Mucosa of descending colon (tissue), 3 donors: ENCODE measurements at regions of chr11 and their contacts with region 1.

Region 1: DNA sequence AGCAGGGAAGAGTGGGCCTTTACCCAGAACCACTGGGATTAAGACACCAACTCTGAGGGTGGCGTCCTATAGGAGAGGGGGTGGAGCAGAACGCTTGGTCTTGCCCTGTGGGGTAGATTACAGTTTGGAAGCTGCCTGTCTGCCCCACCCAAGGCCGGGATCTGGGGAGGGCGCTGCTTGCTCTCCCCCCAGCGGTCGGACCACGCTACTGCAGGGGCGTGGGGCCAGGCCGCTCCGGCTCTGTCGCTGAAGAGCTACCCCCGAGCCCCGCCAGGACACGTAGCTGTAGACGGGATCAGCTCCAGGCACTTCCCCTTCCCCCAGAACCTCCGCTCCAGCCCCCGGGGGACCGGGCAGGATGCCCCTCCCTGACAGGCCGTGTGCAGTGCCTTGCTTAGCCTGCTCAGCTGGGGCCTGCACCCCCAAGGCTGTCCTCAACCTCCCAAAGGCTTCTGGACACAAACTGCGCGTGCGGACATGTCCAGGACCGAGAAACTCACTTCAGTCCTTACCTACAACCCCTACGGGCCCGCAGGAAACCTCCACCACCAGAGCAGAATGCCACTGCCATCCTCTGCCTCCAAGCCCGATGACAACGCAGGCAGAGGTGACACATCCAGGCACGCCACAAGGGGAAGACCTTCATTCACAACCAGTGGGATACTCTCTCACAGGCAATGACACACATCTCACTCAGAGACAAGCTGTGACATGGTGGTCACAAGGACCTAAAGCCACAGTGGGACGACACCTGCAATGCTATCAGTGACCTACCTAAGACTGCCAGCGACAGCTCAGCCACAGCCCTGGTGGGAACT is 3.6 kb downstream of the AHNAK start:
- DNase-seq: peak; percentile 88 to 92 (median 89)
- ATAC-seq: peak; percentile 57
- H3K4me3 ChIP-seq: peak overlapping the region; percentile 12
- H3K4me1 ChIP-seq: peaks cover 68% of the 10 kb centered on the region
- CTCF ChIP-seq: peak; percentile 100

Region 2: GRCh38 chr11:62394825-62395538 is 148.0 kb before region 1 on chr11:
- intact Hi-C with region 1: loop called in 1 of 2 experiments (anchors 10 kb)
- DNase-seq: peak; percentile 71 to 77 (median 76)
- ATAC-seq: peak; percentile 86
- H3K4me3 ChIP-seq: no peak overlapping the region
- H3K4me1 ChIP-seq: peaks cover 13% of the 10 kb centered on the region
- CTCF ChIP-seq: peak; percentile 31

Region 3: GRCh38 chr11:62421996-62422395 is 121.0 kb before region 1 on chr11:
- intact Hi-C with region 1: loop called (anchors 5 kb)
- DNase-seq: no peak
- ATAC-seq: no peak
- H3K4me3 ChIP-seq: no peak overlapping the region
- H3K4me1 ChIP-seq: peaks cover 10% of the 10 kb centered on the region
- CTCF ChIP-seq: no peak

Region 4: DNA sequence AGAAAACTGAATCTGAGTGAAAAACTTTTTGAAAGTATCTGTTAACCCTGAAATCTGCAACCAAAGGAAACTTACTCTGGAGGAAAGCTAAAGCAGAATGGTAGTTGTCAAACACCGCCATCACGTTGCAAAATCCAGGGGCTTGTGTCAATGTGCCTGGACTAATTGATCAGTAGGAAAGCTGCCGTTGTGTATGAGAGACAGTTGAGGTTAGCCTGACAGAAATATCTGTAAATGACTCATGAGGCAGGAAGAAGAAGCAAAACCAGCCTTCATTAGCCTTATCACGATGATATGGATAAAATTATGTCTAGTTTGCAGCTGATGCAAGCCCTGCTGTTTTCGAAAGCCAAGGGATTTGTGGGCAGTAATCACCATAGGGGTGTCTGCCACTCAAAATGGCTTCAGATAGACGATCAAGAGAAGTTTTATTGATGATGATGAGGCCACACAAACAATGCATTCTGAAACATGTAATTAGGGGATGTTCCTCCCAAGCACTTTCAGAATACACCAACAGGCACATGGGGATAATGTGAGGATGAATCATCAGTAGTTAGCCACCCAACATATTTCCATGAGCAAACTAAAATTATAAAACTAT is 115.2 kb before region 1 on chr11:
- intact Hi-C with region 1: loop called (anchors 5 kb)
- DNase-seq: no peak
- ATAC-seq: no peak
- H3K4me3 ChIP-seq: no peak overlapping the region
- H3K4me1 ChIP-seq: peaks cover 13% of the 10 kb centered on the region
- CTCF ChIP-seq: no peak

Region 5: DNA sequence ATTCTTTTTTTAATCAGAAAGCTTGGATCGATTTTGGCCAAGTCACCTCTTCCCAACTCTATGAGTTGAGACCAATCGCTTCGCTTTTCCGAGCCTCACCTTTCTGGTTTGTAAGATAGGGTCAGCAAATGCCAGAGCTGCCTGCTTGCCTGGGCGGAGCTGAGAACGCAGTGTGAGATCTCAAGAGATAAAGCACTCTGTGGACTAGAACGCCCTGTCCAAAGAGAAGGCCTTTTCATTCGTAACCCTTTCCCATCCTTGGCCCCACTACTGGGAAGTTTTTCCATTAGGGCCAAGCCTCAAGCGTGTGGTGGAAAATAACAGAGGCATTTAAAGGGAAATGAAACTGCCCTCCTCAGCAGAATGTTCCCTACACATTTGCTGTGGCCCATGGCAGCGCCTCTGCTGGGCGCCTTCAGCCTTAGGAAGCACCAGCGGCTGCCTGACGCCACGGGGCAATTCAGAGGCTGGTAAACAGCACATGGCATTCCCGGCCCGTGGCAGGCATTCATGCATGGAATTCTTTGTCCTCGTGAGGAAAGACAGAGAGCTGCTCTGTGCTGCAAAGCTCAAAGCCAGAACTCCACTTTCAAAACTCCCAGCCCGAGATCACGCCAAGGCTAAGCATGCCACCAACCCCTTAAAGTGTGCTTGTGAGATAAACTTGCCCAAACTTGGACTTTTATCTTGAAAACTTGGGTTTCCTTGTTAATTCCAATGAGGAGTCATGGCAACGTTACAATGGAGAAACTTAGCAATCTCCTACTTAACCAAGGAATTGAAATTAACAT is 34.5 kb before region 1 on chr11:
- intact Hi-C with region 1: loop called in 1 of 2 experiments (anchors 5 kb)
- DNase-seq: peak; percentile 81 to 85 (median 83)
- ATAC-seq: peak; percentile 78
- H3K4me3 ChIP-seq: no peak overlapping the region
- H3K4me1 ChIP-seq: peaks cover 35% of the 10 kb centered on the region
- CTCF ChIP-seq: no peak